ENCODE measurements at regions of chr1 and their contacts with region 1.

Region 1: GRCh38 chr1:201023517-201023902 is at the start of gene KIF21B:
- DNase-seq: peak; percentile 90
- H3K4me3 Mint-ChIP-seq: peak within 1 kb of the TSS; percentile 96
- H3K27ac Mint-ChIP-seq: peak within 1 kb of the TSS; percentile 98
- H3K4me1 Mint-ChIP-seq: peaks cover 69% of the 10 kb centered on the region
- H3K27me3 Mint-ChIP-seq: no peaks in the 10 kb centered on the region
- total RNA-seq, gene KIF21B: 50.4 and 53.2 TPM in 2 replicates

Region 2: GRCh38 chr1:200602632-200603031 is 420.9 kb before region 1 on chr1:
- intact Hi-C with region 1: no loop called
- DNase-seq: no peak
- H3K4me3 Mint-ChIP-seq: no peak overlapping the region
- H3K27ac Mint-ChIP-seq: no peak overlapping the region
- H3K4me1 Mint-ChIP-seq: peaks cover 3% of the 10 kb centered on the region
- H3K27me3 Mint-ChIP-seq: no peaks in the 10 kb centered on the region

Region 3: GRCh38 chr1:200628223-200628881 is 395.2 kb before region 1 on chr1:
- intact Hi-C with region 1: loop called (anchors 5 kb)
- DNase-seq: no peak
- H3K4me3 Mint-ChIP-seq: peak overlapping the region; percentile 41
- H3K27ac Mint-ChIP-seq: peak overlapping the region; percentile 65
- H3K4me1 Mint-ChIP-seq: peaks cover 35% of the 10 kb centered on the region
- H3K27me3 Mint-ChIP-seq: peaks cover 22% of the 10 kb centered on the region

Region 4: GRCh38 chr1:200669314-200670241 is 353.9 kb before region 1 on chr1 and contains the start of gene DDX59:
- intact Hi-C with region 1: loop called (anchors 5 kb)
- DNase-seq: peak; percentile 89
- H3K4me3 Mint-ChIP-seq: peak within 1 kb of the TSS; percentile 93
- H3K27ac Mint-ChIP-seq: peak within 1 kb of the TSS; percentile 92
- H3K4me1 Mint-ChIP-seq: peaks cover 25% of the 10 kb centered on the region
- H3K27me3 Mint-ChIP-seq: no peaks in the 10 kb centered on the region
- total RNA-seq, gene DDX59: 18.9 and 20.4 TPM in 2 replicates

Region 5: DNA sequence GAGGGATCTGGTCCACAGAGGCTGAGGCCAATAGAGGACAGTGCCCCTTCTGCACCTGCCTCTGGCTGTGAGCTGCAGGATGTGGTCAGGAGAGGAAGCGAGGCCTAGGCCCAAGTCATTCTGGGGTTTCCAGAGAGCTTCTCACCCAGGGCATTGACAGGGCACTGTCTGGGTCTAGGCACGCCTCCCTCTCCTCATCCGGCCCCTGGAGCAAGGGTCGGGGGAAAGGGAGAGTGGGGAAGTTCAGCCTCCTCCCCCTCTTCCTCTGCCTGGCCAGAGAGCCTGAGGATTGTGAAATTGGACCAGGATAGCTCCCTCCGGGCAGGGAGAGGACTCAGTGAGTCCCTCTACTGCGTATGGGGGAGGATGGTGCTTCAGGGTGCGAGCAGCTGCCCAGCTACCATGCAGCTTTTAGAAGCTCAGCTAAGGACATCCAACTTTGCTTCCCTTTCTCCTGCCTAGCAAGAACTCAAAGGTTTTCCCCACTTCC is 135.1 kb before region 1 on chr1:
- intact Hi-C with region 1: loop called (anchors 5 kb)
- DNase-seq: peak; percentile 45
- H3K4me3 Mint-ChIP-seq: no peak overlapping the region
- H3K27ac Mint-ChIP-seq: no peak overlapping the region
- H3K4me1 Mint-ChIP-seq: peaks cover 36% of the 10 kb centered on the region
- H3K27me3 Mint-ChIP-seq: peaks cover 55% of the 10 kb centered on the region

Region 6: DNA sequence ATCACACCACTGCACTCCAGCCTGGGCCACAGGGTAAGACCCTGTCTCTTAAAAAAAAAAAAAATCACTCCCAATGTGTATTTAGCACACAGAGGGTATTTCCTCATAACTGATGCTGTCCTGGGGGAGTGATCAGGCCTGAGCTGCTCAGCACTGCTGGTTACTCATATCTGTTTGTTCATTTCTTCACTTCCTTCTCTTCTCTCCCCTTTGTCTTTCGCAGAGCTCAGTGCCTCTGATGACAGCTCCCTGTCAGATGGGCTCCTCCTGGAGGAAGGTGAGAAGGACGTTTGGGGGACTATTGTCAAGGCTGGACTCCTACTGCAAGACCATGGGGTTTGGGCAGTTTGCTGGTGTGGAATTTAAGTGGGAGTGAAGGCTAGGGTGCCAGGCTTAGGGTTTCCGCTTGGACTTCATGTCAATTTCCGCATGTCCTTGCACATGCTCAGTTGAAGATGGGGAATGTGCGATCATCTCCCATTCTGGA is 115.9 kb before region 1 on chr1:
- intact Hi-C with region 1: loop called (anchors 5 kb)
- DNase-seq: no peak
- H3K4me3 Mint-ChIP-seq: no peak overlapping the region
- H3K27ac Mint-ChIP-seq: no peak overlapping the region
- H3K4me1 Mint-ChIP-seq: peaks cover 4% of the 10 kb centered on the region
- H3K27me3 Mint-ChIP-seq: peaks cover 38% of the 10 kb centered on the region

Region 7: GRCh38 chr1:201059871-201060555 is 36.5 kb after region 1 on chr1:
- intact Hi-C with region 1: no loop called
- DNase-seq: no peak
- H3K4me3 Mint-ChIP-seq: no peak overlapping the region
- H3K27ac Mint-ChIP-seq: no peak overlapping the region
- H3K4me1 Mint-ChIP-seq: peaks cover 12% of the 10 kb centered on the region
- H3K27me3 Mint-ChIP-seq: peaks cover 5% of the 10 kb centered on the region

Region 8: DNA sequence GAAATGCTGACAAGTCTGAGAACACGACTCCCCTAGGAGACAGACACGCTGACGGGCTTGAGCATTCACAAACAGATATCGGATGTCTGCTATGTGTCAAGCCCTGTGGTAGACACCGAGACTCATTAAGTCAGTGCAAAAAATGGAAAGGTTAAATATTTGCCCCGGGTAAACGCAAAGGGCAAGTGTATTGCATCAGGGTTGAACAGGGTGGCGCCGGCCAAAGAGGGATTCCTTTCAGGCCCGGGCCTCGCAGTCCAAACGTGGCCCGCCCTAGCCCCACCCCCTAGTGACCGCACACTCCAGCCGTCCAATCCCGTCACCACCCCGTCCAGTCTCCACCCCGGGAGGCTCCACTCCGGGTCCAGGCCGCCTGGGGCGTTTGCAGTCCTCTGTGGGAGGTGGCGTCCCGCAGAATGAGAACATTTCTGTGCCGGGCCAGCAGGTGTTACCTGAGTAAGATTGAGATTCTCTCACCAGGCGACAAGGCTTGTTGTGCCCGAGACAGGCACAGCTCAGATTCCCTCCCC is 147.1 kb after region 1 on chr1:
- intact Hi-C with region 1: loop called (anchors 5 kb)
- DNase-seq: peak; percentile 61
- H3K4me3 Mint-ChIP-seq: peak overlapping the region; percentile 73
- H3K27ac Mint-ChIP-seq: peak overlapping the region; percentile 63
- H3K4me1 Mint-ChIP-seq: peaks cover 11% of the 10 kb centered on the region
- H3K27me3 Mint-ChIP-seq: peaks cover 30% of the 10 kb centered on the region

Region 9: DNA sequence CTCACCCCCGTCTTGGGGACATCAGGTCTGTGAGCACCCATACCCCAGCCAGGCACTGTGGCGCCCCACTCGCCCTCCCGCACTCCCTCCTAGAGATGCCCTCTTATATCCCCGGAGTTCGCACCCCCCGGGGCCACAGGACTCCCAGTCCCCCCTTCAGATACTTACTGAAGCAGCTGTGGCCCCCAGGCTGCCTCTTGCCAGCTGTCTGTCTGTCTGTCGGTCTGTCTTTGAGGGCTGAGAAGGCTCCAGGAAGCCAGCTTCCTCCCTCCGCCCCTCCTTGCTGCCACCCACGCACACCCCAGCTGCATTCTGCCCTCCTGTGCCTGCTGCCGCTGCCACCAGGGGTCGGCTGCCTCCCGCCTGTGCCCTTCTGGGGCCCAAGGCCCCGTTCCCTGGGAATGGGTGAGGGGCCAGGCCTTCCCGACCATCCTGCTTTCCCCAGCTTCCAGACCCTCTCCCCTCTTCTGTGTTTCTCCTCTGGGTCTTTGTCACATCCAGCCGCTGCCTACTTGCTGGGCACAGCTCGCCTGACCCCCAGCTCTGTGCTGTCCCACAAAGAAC is 1136.9 kb after region 1 on chr1 and contains the start of gene PTPN7:
- intact Hi-C with region 1: loop called (anchors 5 kb)
- DNase-seq: peak; percentile 58
- H3K4me3 Mint-ChIP-seq: peak within 1 kb of the TSS; percentile 100
- H3K27ac Mint-ChIP-seq: peak within 1 kb of the TSS; percentile 99
- H3K4me1 Mint-ChIP-seq: peaks cover 61% of the 10 kb centered on the region
- H3K27me3 Mint-ChIP-seq: no peaks in the 10 kb centered on the region
- total RNA-seq, gene PTPN7: 388 and 398 TPM in 2 replicates

Measured in activated T-helper 2 cell treated with anti-CD3 and anti-CD28 coated beads, Interferon-gamma antibody, Interleukin-2, Interleukin-4, amounts not matched to agents 10 μg/mL and 5 μg/mL and 100 μg/mL, durations not matched to agents 14 hours and 24 hours and 36 hours (primary cell).